Transverse colon (tissue), 4 donors: ENCODE measurements at regions of chr9 and their contacts with region 1.

Region 1: GRCh38 chr9:131349881-131350563 is 43.9 kb upstream of the PRRC2B start:
- DNase-seq: peak; percentile 89
- H3K4me3 ChIP-seq: peak overlapping the region in 1 of 4 donors; percentile 20
- H3K27ac ChIP-seq: no peak overlapping the region
- H3K4me1 ChIP-seq: peaks cover 0 to 10% (median 7%) of the 10 kb centered on the region in 4 donors
- H3K27me3 ChIP-seq: no peaks in the 10 kb centered on the region
- CTCF ChIP-seq: peak; percentile 76 to 85 (median 84)
- EP300 ChIP-seq: no peak
- POLR2A ChIP-seq: no peak

Region 2: GRCh38 chr9:129544761-129545160 is 1805.3 kb before region 1 on chr9:
- in situ Hi-C with region 1: no loop called
- intact Hi-C with region 1: no loop called
- DNase-seq: no peak
- H3K4me3 ChIP-seq: no peak overlapping the region
- H3K27ac ChIP-seq: no peak overlapping the region
- H3K4me1 ChIP-seq: peaks cover 0 to 9% (median 4%) of the 10 kb centered on the region in 4 donors
- H3K27me3 ChIP-seq: peaks cover 21% of the 10 kb centered on the region
- CTCF ChIP-seq: no peak
- EP300 ChIP-seq: no peak
- POLR2A ChIP-seq: no peak

Region 3: GRCh38 chr9:131046581-131047202 is 303.3 kb before region 1 on chr9:
- in situ Hi-C with region 1: loop called in 2 of 4 experiments (anchors 25 kb)
- intact Hi-C with region 1: no loop called
- DNase-seq: peak; percentile 62
- H3K4me3 ChIP-seq: no peak overlapping the region
- H3K27ac ChIP-seq: no peak overlapping the region
- H3K4me1 ChIP-seq: peaks cover 0 to 5% (median 2%) of the 10 kb centered on the region in 4 donors
- H3K27me3 ChIP-seq: peaks cover 12% of the 10 kb centered on the region
- CTCF ChIP-seq: peak; percentile 80 to 92 (median 87)
- EP300 ChIP-seq: no peak
- POLR2A ChIP-seq: no peak

Region 4: GRCh38 chr9:131289301-131290038 is 60.6 kb before region 1 on chr9 and contains the start of gene PLPP7:
- in situ Hi-C with region 1: no loop called
- intact Hi-C with region 1: no loop called
- DNase-seq: peak; percentile 44
- H3K4me3 ChIP-seq: peak within 1 kb of the TSS; percentile 28 to 45 (median 30)
- H3K27ac ChIP-seq: peak within 1 kb of the TSS; percentile 38 to 76 (median 62)
- H3K4me1 ChIP-seq: peaks cover 0 to 11% (median 7%) of the 10 kb centered on the region in 4 donors
- H3K27me3 ChIP-seq: no peaks in the 10 kb centered on the region
- CTCF ChIP-seq: no peak
- EP300 ChIP-seq: no peak
- POLR2A ChIP-seq: no peak
- total RNA-seq, gene PLPP7: 3.0 to 10.3 (median 4.1) TPM

Region 5: GRCh38 chr9:131418143-131419028 is 68.4 kb after region 1 on chr9:
- in situ Hi-C with region 1: no loop called
- intact Hi-C with region 1: no loop called
- DNase-seq: peak; percentile 35
- H3K4me3 ChIP-seq: no peak overlapping the region
- H3K27ac ChIP-seq: peak overlapping the region; percentile 51 to 68 (median 58)
- H3K4me1 ChIP-seq: peaks cover 51 to 75% (median 65%) of the 10 kb centered on the region in 4 donors
- H3K27me3 ChIP-seq: no peaks in the 10 kb centered on the region
- CTCF ChIP-seq: no peak
- EP300 ChIP-seq: no peak
- POLR2A ChIP-seq: no peak

Region 6: GRCh38 chr9:131464354-131465000 is 114.5 kb after region 1 on chr9:
- in situ Hi-C with region 1: loop called in 1 of 4 experiments (anchors 10 kb)
- intact Hi-C with region 1: no loop called
- DNase-seq: no peak
- H3K4me3 ChIP-seq: no peak overlapping the region
- H3K27ac ChIP-seq: no peak overlapping the region
- H3K4me1 ChIP-seq: no peaks in the 10 kb centered on the region
- H3K27me3 ChIP-seq: no peaks in the 10 kb centered on the region
- CTCF ChIP-seq: no peak
- EP300 ChIP-seq: no peak
- POLR2A ChIP-seq: no peak

Region 7: GRCh38 chr9:131478421-131478868 is 128.4 kb after region 1 on chr9:
- in situ Hi-C with region 1: loop called in 1 of 4 experiments (anchors 25 kb)
- intact Hi-C with region 1: loop called (anchors 10 kb)
- DNase-seq: peak; percentile 44
- H3K4me3 ChIP-seq: no peak overlapping the region
- H3K27ac ChIP-seq: no peak overlapping the region
- H3K4me1 ChIP-seq: no peaks in the 10 kb centered on the region
- H3K27me3 ChIP-seq: no peaks in the 10 kb centered on the region
- CTCF ChIP-seq: peak; percentile 50 to 63 (median 57)
- EP300 ChIP-seq: no peak
- POLR2A ChIP-seq: no peak